CD4-positive, alpha-beta T cell (primary cell): ENCODE measurements at regions of chr17 and their contacts with region 1.

Region 1: GRCh38 chr17:82668631-82669099 is 20.4 kb upstream of the WDR45B start:
- DNase-seq: peak in 9 of 14 experiments; percentile 17 to 71 (median 36)
- ATAC-seq: peak; percentile 85
- H3K4me3 ChIP-seq: no peak overlapping the region
- H3K4me3 Mint-ChIP-seq: no peak overlapping the region
- H3K27ac ChIP-seq: no peak overlapping the region
- H3K27ac Mint-ChIP-seq: no peak overlapping the region
- H3K4me1 ChIP-seq: peaks cover 5% of the 10 kb centered on the region
- H3K4me1 Mint-ChIP-seq: peaks cover 12% of the 10 kb centered on the region
- H3K27me3 ChIP-seq: no peaks in the 10 kb centered on the region
- H3K27me3 Mint-ChIP-seq: no peaks in the 10 kb centered on the region
- CTCF ChIP-seq: peak; percentile 30

Region 2: GRCh38 chr17:82687375-82687861 is 18.8 kb after region 1 on chr17:
- CTCF ChIA-PET with region 1: no interaction called
- POLR2A ChIA-PET with region 1: no interaction called
- intact Hi-C with region 1: no loop called
- DNase-seq: no peak
- ATAC-seq: no peak
- H3K4me3 ChIP-seq: no peak overlapping the region
- H3K4me3 Mint-ChIP-seq: no peak overlapping the region
- H3K27ac ChIP-seq: no peak overlapping the region
- H3K27ac Mint-ChIP-seq: no peak overlapping the region
- H3K4me1 ChIP-seq: no peaks in the 10 kb centered on the region
- H3K4me1 Mint-ChIP-seq: no peaks in the 10 kb centered on the region
- H3K27me3 ChIP-seq: no peaks in the 10 kb centered on the region
- H3K27me3 Mint-ChIP-seq: no peaks in the 10 kb centered on the region
- CTCF ChIP-seq: no peak

Region 3: DNA sequence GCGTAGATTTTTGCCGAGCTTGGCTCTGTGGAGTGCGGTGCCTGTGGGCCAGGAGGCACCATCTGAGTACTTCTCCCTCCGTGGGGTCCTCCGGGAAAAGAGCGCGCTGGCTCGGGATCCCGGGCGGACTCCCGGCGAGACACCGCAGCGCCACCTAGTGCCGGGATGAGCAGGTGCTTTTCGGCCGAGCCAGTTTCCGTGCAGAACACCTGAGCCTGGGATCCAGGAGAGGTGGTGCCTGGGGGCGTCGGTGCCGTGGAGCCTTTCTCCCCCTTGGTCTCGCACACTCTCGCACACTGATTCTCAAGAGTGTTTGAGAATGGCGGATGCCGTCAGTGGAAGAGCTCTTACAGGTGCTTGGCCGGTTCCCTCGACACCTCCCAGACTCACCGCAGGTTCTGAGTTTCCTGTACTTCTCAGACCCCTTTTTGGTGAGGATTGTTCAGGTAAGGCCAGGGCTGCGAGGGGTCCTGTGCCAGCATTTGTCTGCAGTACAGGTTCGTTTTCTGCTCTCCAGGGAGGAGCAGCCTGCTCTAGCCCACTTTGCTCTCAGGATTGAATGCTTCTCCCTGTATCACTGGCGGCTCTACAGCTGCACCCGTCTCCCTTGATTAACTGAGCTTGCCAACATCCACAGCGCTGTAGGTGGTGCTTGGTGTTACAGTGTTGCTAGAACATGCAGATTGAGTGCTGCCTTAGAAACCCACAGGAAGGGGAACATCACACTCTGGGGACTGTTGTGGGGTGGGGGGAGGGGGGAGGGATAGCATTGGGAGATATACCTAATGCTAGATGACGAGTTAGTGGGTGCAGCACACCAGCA is 106.5 kb after region 1 on chr17:
- CTCF ChIA-PET with region 1: interaction called, 7 read pairs
- POLR2A ChIA-PET with region 1: no interaction called
- intact Hi-C with region 1: loop called in 1 of 2 experiments (anchors 2 kb)
- DNase-seq: peak in 12 of 14 experiments; percentile 15 to 62 (median 31)
- ATAC-seq: no peak
- H3K4me3 ChIP-seq: peak overlapping the region; percentile 9
- H3K4me3 Mint-ChIP-seq: no peak overlapping the region
- H3K27ac ChIP-seq: no peak overlapping the region
- H3K27ac Mint-ChIP-seq: no peak overlapping the region
- H3K4me1 ChIP-seq: peaks cover 19% of the 10 kb centered on the region
- H3K4me1 Mint-ChIP-seq: peaks cover 10% of the 10 kb centered on the region
- H3K27me3 ChIP-seq: no peaks in the 10 kb centered on the region
- H3K27me3 Mint-ChIP-seq: no peaks in the 10 kb centered on the region
- CTCF ChIP-seq: peak; percentile 77